PC-9 (cell line): ENCODE measurements at regions of chr9 and their contacts with region 1.

Region 1: DNA sequence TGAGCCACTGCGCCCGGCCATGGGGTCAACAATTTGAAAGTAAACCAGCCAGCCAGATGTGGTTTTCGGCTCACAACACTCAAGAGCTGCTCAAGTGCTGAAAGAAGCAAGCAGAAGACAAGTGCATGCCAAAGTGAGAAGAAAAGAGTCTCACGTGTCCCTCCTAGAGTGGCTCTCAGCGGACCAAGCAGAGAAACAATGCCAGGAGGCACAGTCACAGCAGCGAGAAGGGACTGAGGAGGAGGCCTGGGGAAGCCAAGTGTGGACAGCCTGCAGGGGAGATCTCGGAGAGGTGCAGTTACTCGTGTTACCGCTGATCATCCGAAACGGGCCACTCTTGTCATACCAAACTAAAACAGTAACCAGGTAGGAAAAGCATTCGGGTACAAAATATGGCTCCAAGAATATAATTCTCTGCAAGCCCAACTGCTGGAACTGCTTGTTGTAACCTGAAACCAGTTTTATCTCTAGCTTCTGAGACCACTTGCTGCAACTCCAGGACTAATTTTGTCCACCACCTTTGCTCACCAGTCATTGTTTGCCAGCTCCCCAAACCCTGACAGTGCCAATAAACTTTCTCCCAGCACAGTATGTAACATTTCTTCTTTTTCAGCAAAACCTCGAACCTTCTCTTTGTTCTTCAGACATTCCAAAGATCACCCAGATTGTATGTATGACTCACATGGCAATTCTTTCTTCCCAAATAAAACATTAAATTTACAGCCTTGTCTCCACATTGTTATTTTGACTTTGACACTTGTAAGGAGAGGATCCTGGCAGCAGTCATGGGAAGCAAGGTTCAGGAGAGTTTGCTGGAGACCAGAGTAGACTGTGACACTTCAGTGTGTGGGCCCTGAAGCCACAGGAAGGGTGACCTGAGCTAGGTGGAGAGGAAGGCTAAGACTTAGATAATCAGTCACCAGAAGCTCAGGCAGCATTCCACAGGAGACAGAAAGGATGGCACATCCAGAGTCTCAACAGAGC is 6.3 kb downstream of the SLC35D2 start:
- DNase-seq: peak; percentile 46 to 72
- H3K4me3 ChIP-seq: no peak overlapping the region
- H3K27ac ChIP-seq: peak overlapping the region; percentile 42; the same call in 1 of the 2 replicates
- H3K4me1 ChIP-seq: peaks cover 19% of the 10 kb centered on the region
- H3K27me3 ChIP-seq: no peaks in the 10 kb centered on the region
- CTCF ChIP-seq: no peak

Region 2: GRCh38 chr9:96136992-96137670 is 240.1 kb before region 1 on chr9:
- CTCF ChIA-PET with region 1: no interaction called
- POLR2A ChIA-PET with region 1: no interaction called
- intact Hi-C with region 1: no loop called
- DNase-seq: peak in 1 of 2 experiments; percentile 5
- H3K4me3 ChIP-seq: no peak overlapping the region
- H3K27ac ChIP-seq: no peak overlapping the region
- H3K4me1 ChIP-seq: no peaks in the 10 kb centered on the region
- H3K27me3 ChIP-seq: peaks cover 50% of the 10 kb centered on the region
- CTCF ChIP-seq: no peak

Region 3: DNA sequence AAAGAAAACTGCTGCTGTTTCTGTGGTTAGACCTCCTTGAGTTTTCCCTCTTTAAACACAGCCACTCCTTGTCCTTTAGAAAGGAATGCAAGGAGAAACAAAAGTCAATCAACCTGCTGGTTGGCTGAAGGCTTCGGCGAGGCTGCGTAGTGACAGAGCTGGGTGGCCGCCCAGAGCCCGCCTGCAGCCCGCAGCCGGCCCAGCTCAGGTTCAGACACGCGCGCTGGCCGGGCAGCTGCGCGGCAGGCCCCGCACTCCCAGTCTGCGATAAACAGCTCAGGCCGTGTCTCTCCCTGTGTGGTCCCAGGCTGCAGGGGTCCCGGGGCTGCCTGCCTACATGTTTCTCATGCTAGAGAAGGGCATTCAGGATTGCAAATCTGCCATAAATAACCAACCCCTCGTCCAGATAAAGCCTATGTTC is 190.6 kb before region 1 on chr9:
- CTCF ChIA-PET with region 1: no interaction called
- POLR2A ChIA-PET with region 1: no interaction called
- intact Hi-C with region 1: no loop called
- DNase-seq: peak in 1 of 2 experiments; percentile 8
- H3K4me3 ChIP-seq: no peak overlapping the region
- H3K27ac ChIP-seq: no peak overlapping the region
- H3K4me1 ChIP-seq: no peaks in the 10 kb centered on the region
- H3K27me3 ChIP-seq: peaks cover 31% of the 10 kb centered on the region
- CTCF ChIP-seq: no peak

Region 4: DNA sequence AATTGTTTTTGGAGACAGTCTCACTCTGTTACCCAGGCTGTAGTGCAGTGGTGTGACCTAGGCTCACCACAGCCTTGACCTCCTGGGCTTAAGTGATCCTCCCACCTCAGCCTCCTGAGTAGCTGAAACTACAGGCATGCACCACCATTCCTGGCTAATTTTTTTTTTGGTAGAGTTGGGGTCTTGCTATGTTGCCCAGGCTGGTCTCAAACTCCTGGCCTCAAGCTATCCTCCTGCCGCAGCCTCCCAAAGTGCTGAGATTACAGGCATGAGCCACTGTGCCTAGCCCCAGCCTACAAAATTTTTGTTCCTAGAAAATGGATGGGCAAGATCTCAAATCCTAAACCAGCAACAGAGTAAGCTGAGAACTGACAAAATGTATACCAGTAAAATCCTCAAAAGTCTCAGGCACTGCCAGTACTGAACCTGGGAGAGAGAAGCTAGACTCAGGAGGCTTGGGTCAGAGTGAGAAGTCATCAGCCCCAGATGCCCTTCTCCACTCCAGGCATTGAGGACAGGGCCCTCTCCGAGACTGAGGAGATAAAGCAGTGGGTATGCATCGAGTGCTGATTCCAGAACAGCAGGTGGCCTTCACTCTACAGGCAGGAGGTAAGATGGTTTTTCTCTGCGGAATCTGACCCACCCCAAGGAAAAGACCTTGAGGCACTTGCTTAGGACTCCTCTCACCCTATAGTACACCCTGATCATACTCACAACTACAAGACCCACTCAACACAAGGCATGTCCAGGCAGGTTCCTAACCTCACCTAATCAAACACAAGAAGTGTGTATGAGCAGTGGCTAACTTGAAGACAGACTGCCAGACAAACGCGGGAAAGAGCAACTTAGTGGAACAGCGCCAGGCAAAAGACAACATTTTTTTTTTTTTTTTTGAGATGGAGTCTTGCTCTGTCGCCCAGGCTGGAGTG is 110.6 kb before region 1 on chr9:
- CTCF ChIA-PET with region 1: no interaction called
- POLR2A ChIA-PET with region 1: no interaction called
- intact Hi-C with region 1: no loop called
- DNase-seq: no peak
- H3K4me3 ChIP-seq: no peak overlapping the region
- H3K27ac ChIP-seq: no peak overlapping the region
- H3K4me1 ChIP-seq: no peaks in the 10 kb centered on the region
- H3K27me3 ChIP-seq: no peaks in the 10 kb centered on the region
- CTCF ChIP-seq: no peak

Region 5: DNA sequence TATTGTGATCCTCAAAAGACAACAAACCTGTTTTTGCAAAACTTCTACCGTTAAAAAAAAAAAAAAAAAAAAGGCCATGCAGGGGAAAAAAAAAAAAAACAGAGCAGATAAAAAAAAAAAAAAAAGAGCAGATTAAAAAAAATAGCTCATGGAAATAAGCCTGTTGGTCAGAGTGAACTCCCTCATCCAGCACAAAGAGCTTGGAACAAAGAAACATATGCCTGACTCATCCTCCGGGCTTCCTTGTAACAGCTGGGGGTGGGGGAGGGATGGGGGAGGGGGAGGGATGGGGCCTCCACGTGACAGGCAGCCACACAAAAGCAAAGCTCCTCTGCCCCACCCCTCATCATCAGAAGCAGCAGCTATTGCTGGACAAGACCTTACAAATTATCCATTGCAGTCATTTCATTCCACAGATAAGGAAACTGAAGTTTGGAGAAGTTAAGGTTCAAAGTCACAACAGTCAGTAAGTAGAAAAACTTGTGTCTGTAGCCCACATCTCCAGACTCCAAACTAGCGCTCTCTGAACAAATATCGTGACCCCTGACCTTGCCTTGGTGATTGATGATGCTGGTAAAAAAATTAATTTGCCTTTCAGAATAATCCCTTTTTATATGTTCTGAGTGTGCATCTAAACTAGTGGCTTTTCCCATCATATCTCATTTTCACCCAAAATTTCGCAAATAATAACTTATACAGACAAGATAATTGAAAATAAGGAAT is 32.6 kb before region 1 on chr9:
- CTCF ChIA-PET with region 1: no interaction called
- POLR2A ChIA-PET with region 1: interaction called, 16 read pairs
- intact Hi-C with region 1: loop called (anchors 5 kb)
- DNase-seq: peak; percentile 66 to 87
- H3K4me3 ChIP-seq: no peak overlapping the region
- H3K27ac ChIP-seq: peak overlapping the region; percentile 28
- H3K4me1 ChIP-seq: peaks cover 25% of the 10 kb centered on the region
- H3K27me3 ChIP-seq: no peaks in the 10 kb centered on the region
- CTCF ChIP-seq: no peak

Region 6: DNA sequence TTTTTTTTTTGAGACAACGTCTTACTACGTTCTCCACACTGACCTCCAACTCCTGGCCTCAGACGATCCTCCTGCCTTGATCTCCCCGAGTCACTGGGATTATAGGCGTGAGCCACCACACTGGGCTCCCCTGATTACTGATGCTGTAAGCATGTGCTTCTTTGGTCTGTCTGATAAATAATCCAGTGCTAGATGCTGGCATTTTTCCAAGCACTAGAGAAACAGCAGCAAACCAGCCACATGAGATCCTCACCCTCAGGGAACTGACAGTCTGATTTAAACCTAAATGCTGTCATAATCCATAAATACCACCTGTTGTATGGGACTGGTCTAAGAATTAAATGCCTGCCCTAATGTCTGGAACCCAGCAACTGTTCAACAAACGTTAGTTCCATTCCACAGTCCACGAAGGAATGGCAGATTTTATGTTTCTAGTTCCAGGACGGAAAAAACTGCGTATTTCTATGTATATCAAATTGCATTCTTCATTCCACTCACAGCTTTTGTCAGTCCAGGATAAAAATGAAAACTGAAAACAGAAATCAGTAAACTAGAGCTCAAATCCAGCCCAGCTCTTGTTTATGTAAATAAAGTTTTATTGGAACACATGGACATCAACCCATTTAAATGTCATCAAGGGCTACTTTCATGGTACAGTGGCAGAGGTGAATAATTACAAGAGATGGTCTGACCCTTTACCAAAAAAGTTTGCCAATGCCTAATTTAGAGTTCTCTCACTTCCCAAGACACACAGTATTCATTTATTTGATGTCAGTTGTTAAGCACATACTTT is 13.8 kb before region 1 on chr9:
- CTCF ChIA-PET with region 1: interaction called, 5 read pairs
- POLR2A ChIA-PET with region 1: interaction called, 11 read pairs
- intact Hi-C with region 1: no loop called
- DNase-seq: no peak
- H3K4me3 ChIP-seq: no peak overlapping the region
- H3K27ac ChIP-seq: no peak overlapping the region
- H3K4me1 ChIP-seq: no peaks in the 10 kb centered on the region
- H3K27me3 ChIP-seq: no peaks in the 10 kb centered on the region
- CTCF ChIP-seq: no peak